Cardiac septum (tissue), 1 donor: ENCODE measurements at regions of chr2 and their contacts with region 1.

Region 1: GRCh38 chr2:172588931-172589330 is 33.0 kb downstream of the PDK1 start:
- DNase-seq: no peak

Region 2: DNA sequence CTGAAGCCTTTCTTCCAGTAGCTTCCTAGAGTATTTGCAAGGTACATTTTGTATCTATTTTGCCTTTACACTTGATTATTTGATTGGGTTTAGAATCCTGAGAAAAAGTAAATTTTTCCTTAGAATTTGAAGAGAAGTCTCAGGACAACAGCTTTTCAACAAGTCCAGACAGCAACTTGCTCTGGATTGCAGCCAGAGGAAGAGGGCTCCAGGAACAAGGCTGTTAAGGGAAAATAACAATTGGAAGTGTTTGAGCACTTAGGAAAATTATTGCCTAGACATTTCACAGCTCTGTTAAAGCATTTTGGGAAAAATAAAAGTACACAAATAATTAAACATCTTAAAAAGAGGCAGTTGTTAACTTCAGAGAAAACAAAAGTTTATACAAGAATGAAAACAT is 88.4 kb after region 1 on chr2:
- intact Hi-C with region 1: loop called (anchors 5 kb)
- DNase-seq: no peak